Activated CD4-positive, alpha-beta memory T cell treated with anti-CD3 and anti-CD28 coated beads for 36 hours (primary cell): ENCODE measurements at regions of chr6 and their contacts with region 1.

Region 1: GRCh38 chr6:37051138-37052026 is 45.9 kb downstream of the FGD2 start:
- DNase-seq: peak; percentile 95
- H3K4me3 Mint-ChIP-seq: peak overlapping the region; percentile 53
- H3K27ac Mint-ChIP-seq: peak overlapping the region; percentile 98
- H3K4me1 Mint-ChIP-seq: peaks cover 55% of the 10 kb centered on the region
- H3K27me3 Mint-ChIP-seq: no peaks in the 10 kb centered on the region

Region 2: GRCh38 chr6:36985808-36986703 is 65.3 kb before region 1 on chr6 and contains the start of gene MTCH1:
- CTCF ChIA-PET with region 1: interaction called, 3 read pairs
- POLR2A ChIA-PET with region 1: interaction called, 3 read pairs
- intact Hi-C with region 1: loop called (anchors 2 kb)
- DNase-seq: peak; percentile 90
- H3K4me3 Mint-ChIP-seq: peak within 1 kb of the TSS; percentile 99
- H3K27ac Mint-ChIP-seq: peak within 1 kb of the TSS; percentile 90
- H3K4me1 Mint-ChIP-seq: peaks cover 18% of the 10 kb centered on the region
- H3K27me3 Mint-ChIP-seq: no peaks in the 10 kb centered on the region
- total RNA-seq, gene MTCH1: 109 to 114 TPM

Region 3: DNA sequence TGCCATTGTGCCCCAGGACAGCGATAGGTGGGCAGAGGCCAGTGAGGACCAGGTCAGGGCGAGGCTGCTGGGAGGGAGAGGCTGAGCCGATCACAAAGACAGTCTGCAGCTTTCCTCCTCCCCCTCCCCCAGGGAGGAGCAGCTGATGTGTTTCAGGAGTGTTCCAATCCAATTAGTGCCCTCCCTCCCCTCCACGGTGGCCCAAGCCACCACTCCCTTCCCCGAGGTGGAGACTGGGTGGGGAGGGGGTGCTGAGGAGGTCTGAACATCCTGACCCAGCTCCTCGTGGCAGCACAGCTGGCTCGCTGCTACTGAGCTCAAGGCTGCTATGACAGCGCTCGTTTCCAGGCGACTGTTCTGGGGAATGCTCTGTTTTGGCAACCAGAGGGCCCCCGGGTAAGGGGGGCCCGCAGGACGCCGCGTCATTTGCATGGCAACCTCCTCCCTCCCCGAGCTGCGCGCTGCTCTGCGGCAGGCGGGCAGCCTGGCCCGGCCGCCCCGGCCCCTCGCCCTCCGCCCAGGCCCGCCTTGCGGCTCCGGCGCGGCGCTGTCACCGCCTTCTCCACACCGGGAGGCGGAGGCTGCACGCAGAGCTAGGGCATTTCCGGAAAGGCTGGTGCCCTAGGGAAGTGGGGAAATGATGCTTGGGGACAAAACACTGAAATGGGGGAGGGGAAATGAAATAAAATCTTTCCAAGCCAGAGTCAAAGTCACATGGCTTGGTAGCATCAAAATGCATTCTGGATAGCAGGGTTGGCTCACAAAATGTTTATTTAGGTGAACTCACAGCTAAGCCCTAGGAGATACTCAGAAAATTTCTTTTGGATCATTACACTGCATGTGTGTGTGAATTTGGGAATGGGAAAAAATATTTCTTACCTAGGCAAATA is 51.1 kb after region 1 on chr6:
- CTCF ChIA-PET with region 1: interaction called, 10 read pairs
- POLR2A ChIA-PET with region 1: no interaction called
- intact Hi-C with region 1: no loop called
- DNase-seq: peak; percentile 87
- H3K4me3 Mint-ChIP-seq: peak overlapping the region; percentile 65
- H3K27ac Mint-ChIP-seq: peak overlapping the region; percentile 79
- H3K4me1 Mint-ChIP-seq: peaks cover 30% of the 10 kb centered on the region
- H3K27me3 Mint-ChIP-seq: no peaks in the 10 kb centered on the region

Region 4: DNA sequence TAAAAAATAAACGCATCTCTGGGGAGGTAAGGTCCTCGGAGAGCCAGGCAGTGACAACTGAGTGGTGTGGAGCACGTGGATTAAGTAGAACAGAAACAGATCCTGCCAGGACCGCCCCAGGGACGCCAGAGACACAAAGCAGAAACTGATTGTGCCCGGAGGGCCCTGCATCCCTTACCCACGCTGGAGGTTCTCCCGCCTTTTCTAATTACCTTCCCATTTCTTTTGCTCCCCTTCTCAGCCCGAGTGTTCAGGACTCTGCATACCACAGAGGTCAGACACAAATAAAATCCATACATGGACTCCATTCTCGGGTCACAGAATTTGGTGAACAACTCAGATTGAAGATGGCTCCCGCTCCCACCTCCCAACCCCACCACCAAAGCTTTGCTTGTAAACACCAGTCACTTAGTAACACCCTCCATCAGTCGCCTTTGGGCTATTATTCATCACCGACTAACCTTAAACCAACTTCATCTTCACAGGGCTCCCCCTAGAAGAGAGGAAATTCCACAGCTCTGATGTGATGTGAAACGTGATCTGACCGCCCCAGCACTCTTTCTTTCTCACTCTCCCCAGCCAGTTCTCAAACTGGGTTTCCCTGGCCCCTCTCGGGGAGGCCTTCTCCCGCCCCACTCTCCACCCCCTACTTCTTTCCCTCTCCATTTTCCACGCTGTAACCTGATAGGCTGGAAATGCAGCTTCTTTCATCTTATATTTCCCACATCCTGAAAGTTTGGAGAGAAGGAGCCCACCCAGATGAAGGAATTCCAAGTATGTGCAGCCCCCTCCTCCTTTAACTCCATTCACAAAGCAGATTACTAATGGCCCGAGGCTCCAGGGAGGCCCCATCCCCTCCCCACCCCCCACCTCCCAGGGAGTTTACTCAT is 86.1 kb after region 1 on chr6:
- CTCF ChIA-PET with region 1: interaction called, 14 read pairs
- POLR2A ChIA-PET with region 1: interaction called, 4 read pairs
- intact Hi-C with region 1: loop called (anchors 1 kb)
- DNase-seq: peak; percentile 81
- H3K4me3 Mint-ChIP-seq: peak overlapping the region; percentile 66
- H3K27ac Mint-ChIP-seq: peak overlapping the region; percentile 84
- H3K4me1 Mint-ChIP-seq: peaks cover 54% of the 10 kb centered on the region
- H3K27me3 Mint-ChIP-seq: no peaks in the 10 kb centered on the region

Region 5: GRCh38 chr6:37207903-37208456 is 156.6 kb after region 1 on chr6:
- CTCF ChIA-PET with region 1: interaction called, 111 read pairs
- POLR2A ChIA-PET with region 1: interaction called, 8 read pairs
- intact Hi-C with region 1: loop called (anchors 1 kb)
- DNase-seq: peak; percentile 95
- H3K4me3 Mint-ChIP-seq: no peak overlapping the region
- H3K27ac Mint-ChIP-seq: peak overlapping the region; percentile 69
- H3K4me1 Mint-ChIP-seq: peaks cover 63% of the 10 kb centered on the region
- H3K27me3 Mint-ChIP-seq: no peaks in the 10 kb centered on the region

Region 6: GRCh38 chr6:38131527-38131965 is 1080.2 kb after region 1 on chr6:
- CTCF ChIA-PET with region 1: no interaction called
- POLR2A ChIA-PET with region 1: no interaction called
- intact Hi-C with region 1: no loop called
- DNase-seq: peak; percentile 37
- H3K4me3 Mint-ChIP-seq: no peak overlapping the region
- H3K27ac Mint-ChIP-seq: no peak overlapping the region
- H3K4me1 Mint-ChIP-seq: peaks cover 46% of the 10 kb centered on the region
- H3K27me3 Mint-ChIP-seq: no peaks in the 10 kb centered on the region